Caco-2 (cell line): ENCODE measurements at regions of chr20 and their contacts with region 1.

Region 1: DNA sequence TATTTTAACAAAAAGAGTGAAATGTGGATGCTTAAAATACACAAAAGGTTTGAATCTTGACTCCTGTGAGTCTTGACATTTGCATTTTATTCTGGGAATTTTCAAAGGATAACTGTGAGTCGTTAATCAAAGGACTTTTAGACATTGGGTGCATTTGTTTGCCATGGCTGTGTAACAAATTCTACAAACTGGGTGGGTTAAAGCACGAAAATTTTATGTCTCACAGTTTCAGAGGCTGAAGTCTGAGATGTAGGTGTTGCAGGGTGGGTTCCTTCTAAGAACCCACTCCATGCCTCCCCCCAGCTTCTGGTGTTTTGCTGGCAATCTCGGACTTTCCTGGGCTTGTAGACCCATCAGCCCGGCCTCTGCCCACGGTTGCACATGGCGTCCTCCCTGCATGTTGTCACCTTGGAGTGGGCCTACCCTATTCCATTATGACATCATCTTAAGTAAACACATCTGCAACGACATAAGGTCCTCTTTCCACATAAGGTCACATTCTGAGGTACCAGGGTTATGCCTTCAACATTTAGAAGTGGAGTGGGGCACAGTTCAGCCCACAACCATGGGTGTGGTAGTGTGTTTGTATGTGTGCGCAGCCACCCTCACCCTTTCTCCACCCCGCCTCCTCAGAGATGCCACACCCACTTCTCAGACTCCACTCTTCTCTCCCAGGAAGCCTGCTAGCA is 113.1 kb downstream of the FOXA2 start:
- DNase-seq: peak in 1 of 2 experiments; percentile 29
- H3K4me3 ChIP-seq: no peak overlapping the region
- H3K4me3 Mint-ChIP-seq: no peak overlapping the region
- H3K27ac Mint-ChIP-seq: peak overlapping the region; percentile 28
- H3K4me1 ChIP-seq: peaks cover 17% of the 10 kb centered on the region
- H3K4me1 Mint-ChIP-seq: peaks cover 11% of the 10 kb centered on the region
- H3K27me3 ChIP-seq: no peaks in the 10 kb centered on the region
- H3K27me3 Mint-ChIP-seq: no peaks in the 10 kb centered on the region
- CTCF ChIP-seq: no peak

Region 2: GRCh38 chr20:22389836-22390542 is 81.3 kb before region 1 on chr20:
- CTCF ChIA-PET with region 1: no interaction called
- POLR2A ChIA-PET with region 1: no interaction called
- intact Hi-C with region 1: no loop called
- DNase-seq: no peak
- H3K4me3 ChIP-seq: no peak overlapping the region
- H3K4me3 Mint-ChIP-seq: no peak overlapping the region
- H3K27ac Mint-ChIP-seq: peak overlapping the region; percentile 59
- H3K4me1 ChIP-seq: no peaks in the 10 kb centered on the region
- H3K4me1 Mint-ChIP-seq: peaks cover 7% of the 10 kb centered on the region
- H3K27me3 ChIP-seq: peaks cover 2% of the 10 kb centered on the region; the same call in 1 of the 2 replicates
- H3K27me3 Mint-ChIP-seq: peaks cover 3% of the 10 kb centered on the region
- CTCF ChIP-seq: no peak

Region 3: DNA sequence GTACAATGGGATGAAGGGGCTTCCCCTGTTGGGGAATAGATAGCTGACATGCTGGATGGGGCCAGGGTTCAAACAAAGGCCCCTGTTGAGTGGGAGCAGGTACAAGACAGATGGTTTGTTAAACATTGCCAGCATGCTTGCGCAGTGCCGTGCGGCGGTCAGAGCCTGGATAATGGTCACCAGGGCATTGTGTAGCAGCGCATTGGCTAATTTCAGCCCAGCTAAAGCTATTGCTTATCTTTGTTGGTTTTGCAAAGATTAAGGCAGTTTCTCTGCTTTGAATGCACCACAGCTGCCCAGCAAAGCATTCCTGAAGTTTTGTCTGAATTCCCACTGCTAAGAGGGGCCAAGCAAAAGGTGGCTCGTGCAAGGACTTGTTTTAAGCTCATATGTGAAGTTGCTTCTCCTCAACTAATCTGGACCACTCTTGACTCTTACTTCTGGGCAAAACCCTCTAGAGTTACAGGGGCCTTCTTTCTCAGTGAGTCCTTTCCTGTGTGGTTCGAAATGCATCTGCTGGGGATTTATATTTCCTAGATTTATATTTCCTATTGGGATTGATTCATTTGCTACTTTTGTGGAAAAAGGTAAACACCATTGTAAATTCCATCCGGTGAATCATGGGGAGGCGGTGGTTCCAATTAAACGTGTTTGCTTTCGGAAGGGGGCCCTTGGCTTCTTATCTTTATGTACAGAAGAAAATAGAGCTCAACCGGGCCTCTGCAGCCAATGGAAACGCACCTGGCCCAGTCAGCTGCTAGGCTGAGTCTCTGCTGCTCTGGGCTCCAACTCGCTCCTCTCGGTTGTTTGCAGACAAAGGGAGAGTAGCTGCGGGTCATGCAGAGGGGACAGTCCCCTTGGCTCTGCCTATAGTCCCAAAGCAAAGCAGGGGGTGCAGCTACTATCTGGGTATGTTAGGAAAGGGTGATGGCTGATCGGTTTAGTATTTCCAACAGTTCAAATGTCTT is 40.9 kb after region 1 on chr20:
- CTCF ChIA-PET with region 1: no interaction called
- POLR2A ChIA-PET with region 1: no interaction called
- intact Hi-C with region 1: loop called (anchors 1 kb)
- DNase-seq: peak; percentile 92 to 96
- H3K4me3 ChIP-seq: no peak overlapping the region
- H3K4me3 Mint-ChIP-seq: peak overlapping the region; percentile 35
- H3K27ac Mint-ChIP-seq: peak overlapping the region; percentile 50
- H3K4me1 ChIP-seq: peaks cover 71% of the 10 kb centered on the region
- H3K4me1 Mint-ChIP-seq: peaks cover 65% of the 10 kb centered on the region
- H3K27me3 ChIP-seq: no peaks in the 10 kb centered on the region
- H3K27me3 Mint-ChIP-seq: no peaks in the 10 kb centered on the region
- CTCF ChIP-seq: no peak